GM12878 (cell line): ENCODE measurements at regions of chr10 and their contacts with region 1.

Region 1: DNA sequence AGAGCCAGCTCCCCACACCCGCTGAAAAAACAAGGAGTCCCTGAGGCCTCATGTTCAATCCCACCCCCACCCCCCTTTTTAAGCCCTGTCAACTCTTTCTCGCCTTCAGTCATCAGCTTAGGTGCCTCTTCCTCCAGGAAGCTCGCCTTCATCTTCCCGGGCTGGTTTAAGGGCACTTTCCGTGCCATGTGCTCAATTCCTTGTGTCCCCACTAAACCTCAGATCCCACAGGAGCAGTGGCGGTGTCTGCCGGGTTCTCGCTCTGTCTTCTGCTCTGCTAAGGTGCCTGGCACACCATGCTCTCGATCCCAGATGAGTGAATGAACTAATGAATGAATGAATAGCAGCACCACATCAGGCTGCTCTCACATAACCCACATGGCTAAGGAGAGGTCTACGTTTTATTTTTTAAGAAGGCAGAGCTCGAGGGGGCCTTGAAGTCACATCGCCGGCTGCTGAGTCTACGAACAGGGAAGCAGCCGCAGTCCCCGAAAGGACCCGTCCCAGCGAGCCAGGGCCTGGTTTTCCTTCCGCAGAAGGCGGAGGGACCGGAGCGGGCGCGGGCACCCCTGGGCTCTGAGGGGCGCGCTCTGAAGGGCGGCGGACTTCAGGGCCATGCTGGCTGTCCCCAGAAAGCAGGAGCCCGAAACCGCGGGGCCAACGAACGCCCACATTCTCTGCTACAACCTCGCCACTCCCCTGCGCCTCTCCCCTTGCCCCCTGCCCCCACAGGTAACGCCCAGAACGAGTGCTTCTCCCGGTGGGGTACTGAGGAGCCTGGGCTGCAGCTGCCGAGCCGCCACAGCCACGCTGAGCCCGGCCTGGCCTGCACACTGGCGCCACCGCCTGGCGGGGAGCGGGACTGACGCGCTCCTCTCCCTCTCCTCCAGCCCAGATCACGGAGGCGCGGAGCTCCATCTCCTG is 73.4 kb upstream of the KCNMA1 start:
- DNase-seq: no peak
- ATAC-seq: peak; percentile 79
- H3K4me3 ChIP-seq: peak overlapping the region; percentile 65
- H3K27ac ChIP-seq: peak overlapping the region; percentile 21
- H3K4me1 ChIP-seq: peaks cover 21% of the 10 kb centered on the region
- H3K27me3 ChIP-seq: no peaks in the 10 kb centered on the region
- CTCF ChIP-seq: peak; percentile 97 to 99 (median 99)
- EP300 ChIP-seq: no peak
- POLR2A ChIP-seq: no peak
- RAD21 ChIP-seq: peak; percentile 91

Region 2: DNA sequence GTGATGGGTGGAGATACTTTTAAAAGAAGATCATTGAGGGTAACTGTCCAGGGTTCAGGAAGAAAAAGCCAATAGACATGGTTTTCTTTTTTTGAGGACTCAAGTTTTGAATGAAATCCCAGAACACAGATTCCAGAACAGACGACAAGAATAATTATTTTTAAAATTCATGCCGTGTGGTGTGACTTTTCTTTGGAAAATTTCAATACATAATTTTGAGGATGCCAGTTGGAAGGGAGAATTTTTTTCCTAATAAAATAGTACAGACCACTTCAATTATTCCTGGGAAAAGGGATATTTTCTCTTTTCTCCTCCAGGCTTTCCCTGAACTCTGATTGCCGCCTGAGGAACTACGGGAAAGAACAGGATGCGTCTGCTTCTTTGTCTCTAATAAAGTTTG is 1024.8 kb before region 1 on chr10:
- CTCF ChIA-PET with region 1: no interaction called
- POLR2A ChIA-PET with region 1: no interaction called
- RAD21 ChIA-PET with region 1: no interaction called
- SMC1A ChIA-PET with region 1: no interaction called
- in situ Hi-C with region 1: no loop called
- intact Hi-C with region 1: no loop called
- DNase-seq: no peak
- ATAC-seq: no peak
- H3K4me3 ChIP-seq: no peak overlapping the region
- H3K27ac ChIP-seq: no peak overlapping the region
- H3K4me1 ChIP-seq: no peaks in the 10 kb centered on the region
- H3K27me3 ChIP-seq: no peaks in the 10 kb centered on the region
- CTCF ChIP-seq: no peak
- EP300 ChIP-seq: no peak
- POLR2A ChIP-seq: no peak
- RAD21 ChIP-seq: no peak

Region 3: DNA sequence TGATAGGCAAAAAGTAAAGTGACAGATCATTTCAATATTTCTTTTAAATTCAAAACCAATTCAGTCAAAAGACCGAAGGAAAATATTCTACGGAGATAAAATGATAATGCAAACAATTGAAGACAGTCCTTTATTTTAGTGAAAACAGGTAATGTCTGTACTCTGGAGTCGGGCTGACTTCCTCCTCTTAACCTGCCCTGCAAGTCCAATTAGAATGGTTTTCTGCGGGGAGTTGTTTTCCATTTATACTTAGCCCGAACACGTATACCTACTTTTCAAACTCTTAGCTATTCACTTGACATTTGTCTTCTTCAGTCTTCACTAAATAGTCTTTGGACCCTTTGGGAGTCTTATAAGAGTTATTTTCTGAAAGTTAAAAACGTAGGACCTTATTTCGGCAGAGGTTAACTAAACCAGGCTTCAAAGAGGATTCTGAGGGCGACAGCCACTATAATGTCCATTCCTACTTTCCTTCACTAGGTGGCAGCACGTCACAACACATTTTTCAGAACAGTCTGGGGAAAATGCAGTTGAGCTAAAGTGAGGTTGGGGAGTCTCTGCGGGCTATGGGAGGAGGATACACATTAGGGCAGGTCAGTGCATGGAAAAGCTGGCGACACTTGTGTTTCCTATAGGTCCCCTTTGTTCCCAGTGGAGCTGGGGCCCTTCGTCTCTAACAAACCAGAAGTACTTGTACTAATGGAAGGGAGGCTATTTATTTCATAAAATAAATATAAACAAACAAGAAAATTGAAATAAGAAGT is 545.4 kb before region 1 on chr10:
- CTCF ChIA-PET with region 1: interaction called, 340 read pairs
- POLR2A ChIA-PET with region 1: interaction called, 3 read pairs
- RAD21 ChIA-PET with region 1: interaction called, 48 read pairs
- SMC1A ChIA-PET with region 1: interaction called, 82 read pairs
- in situ Hi-C with region 1: loop called (anchors 5 kb)
- intact Hi-C with region 1: no loop called
- DNase-seq: peak; percentile 24
- ATAC-seq: peak; percentile 95; the same call in 2 of the 3 replicates
- H3K4me3 ChIP-seq: no peak overlapping the region
- H3K27ac ChIP-seq: no peak overlapping the region
- H3K4me1 ChIP-seq: no peaks in the 10 kb centered on the region
- H3K27me3 ChIP-seq: no peaks in the 10 kb centered on the region
- CTCF ChIP-seq: peak; percentile 80 to 87 (median 81); a peak in 5 of 6 replicates
- EP300 ChIP-seq: no peak
- POLR2A ChIP-seq: no peak
- RAD21 ChIP-seq: peak; percentile 82

Region 4: GRCh38 chr10:77428691-77429395 is 282.2 kb before region 1 on chr10:
- CTCF ChIA-PET with region 1: interaction called, 12 read pairs
- POLR2A ChIA-PET with region 1: no interaction called
- RAD21 ChIA-PET with region 1: interaction called, 3 read pairs
- SMC1A ChIA-PET with region 1: interaction called, 4 read pairs
- in situ Hi-C with region 1: no loop called
- intact Hi-C with region 1: no loop called
- DNase-seq: no peak
- ATAC-seq: peak; percentile 66
- H3K4me3 ChIP-seq: no peak overlapping the region
- H3K27ac ChIP-seq: no peak overlapping the region
- H3K4me1 ChIP-seq: no peaks in the 10 kb centered on the region
- H3K27me3 ChIP-seq: no peaks in the 10 kb centered on the region
- CTCF ChIP-seq: peak in 2 of 3 experiments; percentile 28 to 55; a peak in 4 of 6 replicates
- EP300 ChIP-seq: no peak
- POLR2A ChIP-seq: no peak
- RAD21 ChIP-seq: peak; percentile 26; the same call in 1 of the 2 replicates

Region 5: GRCh38 chr10:77636282-77636966 is 74.6 kb before region 1 on chr10:
- CTCF ChIA-PET with region 1: interaction called, 403 read pairs
- POLR2A ChIA-PET with region 1: interaction called, 13 read pairs
- RAD21 ChIA-PET with region 1: interaction called, 290 read pairs
- SMC1A ChIA-PET with region 1: interaction called, 291 read pairs
- in situ Hi-C with region 1: no loop called
- intact Hi-C with region 1: no loop called
- DNase-seq: no peak
- ATAC-seq: peak; percentile 27
- H3K4me3 ChIP-seq: no peak overlapping the region
- H3K27ac ChIP-seq: no peak overlapping the region
- H3K4me1 ChIP-seq: no peaks in the 10 kb centered on the region
- H3K27me3 ChIP-seq: no peaks in the 10 kb centered on the region; a peak in 1 of 4 replicates
- CTCF ChIP-seq: no peak
- EP300 ChIP-seq: no peak
- POLR2A ChIP-seq: no peak
- RAD21 ChIP-seq: no peak

Region 6: GRCh38 chr10:77667426-77668324 is 43.3 kb before region 1 on chr10:
- CTCF ChIA-PET with region 1: interaction called, 56 read pairs
- POLR2A ChIA-PET with region 1: interaction called, 5 read pairs
- RAD21 ChIA-PET with region 1: interaction called, 30 read pairs
- SMC1A ChIA-PET with region 1: interaction called, 22 read pairs
- in situ Hi-C with region 1: no loop called
- intact Hi-C with region 1: no loop called
- DNase-seq: peak; percentile 77
- ATAC-seq: peak; percentile 95
- H3K4me3 ChIP-seq: no peak overlapping the region
- H3K27ac ChIP-seq: no peak overlapping the region
- H3K4me1 ChIP-seq: peaks cover 13% of the 10 kb centered on the region
- H3K27me3 ChIP-seq: no peaks in the 10 kb centered on the region
- CTCF ChIP-seq: no peak
- EP300 ChIP-seq: peak; percentile 11 to 48; a peak in 1 of 4 replicates
- POLR2A ChIP-seq: no peak
- RAD21 ChIP-seq: no peak

Region 7: DNA sequence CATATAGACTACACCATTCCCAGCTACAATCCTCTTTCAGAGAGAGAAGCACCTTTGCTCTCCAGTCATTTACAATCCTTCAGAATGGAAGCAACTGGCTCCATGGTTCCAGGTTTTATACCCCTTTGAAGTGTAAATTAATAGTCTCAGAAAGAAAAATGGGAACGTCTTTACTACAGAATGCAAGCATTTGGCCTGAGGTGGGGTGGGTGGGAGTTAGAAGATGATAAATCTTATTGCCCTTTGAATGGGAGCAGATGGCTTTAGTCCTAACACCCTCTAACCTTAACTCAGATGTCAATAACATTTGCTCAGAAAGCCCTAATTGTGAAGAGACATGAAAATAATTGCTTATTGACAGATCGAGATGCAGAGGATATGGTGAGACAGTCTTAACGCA is 10.8 kb after region 1 on chr10:
- CTCF ChIA-PET with region 1: interaction called, 53 read pairs
- POLR2A ChIA-PET with region 1: no interaction called
- RAD21 ChIA-PET with region 1: interaction called, 3 read pairs
- SMC1A ChIA-PET with region 1: interaction called, 3 read pairs
- in situ Hi-C with region 1: no loop called
- intact Hi-C with region 1: no loop called
- DNase-seq: no peak
- ATAC-seq: no peak
- H3K4me3 ChIP-seq: no peak overlapping the region
- H3K27ac ChIP-seq: no peak overlapping the region
- H3K4me1 ChIP-seq: no peaks in the 10 kb centered on the region
- H3K27me3 ChIP-seq: no peaks in the 10 kb centered on the region; a peak in 1 of 4 replicates
- CTCF ChIP-seq: no peak
- EP300 ChIP-seq: no peak
- POLR2A ChIP-seq: no peak
- RAD21 ChIP-seq: no peak